Gastrocnemius medialis (tissue), 4 donors: ENCODE measurements at regions of chr13 and their contacts with region 1.

Region 1: DNA sequence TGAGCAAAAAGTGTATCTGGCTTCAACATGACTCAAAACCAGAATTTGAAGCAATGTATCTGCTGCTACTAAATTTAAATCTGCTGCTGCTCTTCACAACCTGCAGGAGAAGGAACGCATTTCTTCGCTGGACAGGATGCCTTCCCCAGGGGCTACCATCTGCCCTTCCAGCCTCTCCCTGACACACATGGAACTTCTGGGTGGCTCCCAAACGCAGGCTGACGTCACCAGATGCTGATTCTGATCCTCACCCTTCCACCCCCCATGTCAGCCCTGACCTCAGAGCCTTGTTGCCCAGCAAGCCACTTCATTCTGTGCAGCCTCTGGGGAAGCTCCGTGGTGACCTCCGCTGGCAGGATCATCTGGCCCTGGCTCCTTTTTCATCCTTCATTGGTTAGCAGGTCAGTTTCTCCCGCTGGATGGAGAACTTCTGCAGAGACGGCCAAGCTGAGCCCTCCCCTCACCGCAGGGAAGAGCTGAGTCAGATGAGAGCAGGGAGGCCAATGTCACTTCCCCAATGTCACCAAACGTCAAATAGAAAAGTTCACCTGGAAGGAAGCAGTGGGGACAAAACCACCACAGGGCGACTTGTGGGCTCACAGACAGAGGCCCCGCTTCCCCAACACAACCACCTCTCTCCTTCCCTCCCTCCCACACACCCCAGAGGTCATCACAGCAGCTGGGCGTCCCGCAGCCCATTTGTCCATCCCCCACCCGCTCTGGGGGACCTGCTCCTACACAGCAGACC is 14.0 kb upstream of the RAB20 start:
- DNase-seq: peak in 1 of 2 donors; percentile 23
- ATAC-seq: peak in 1 of 2 donors; percentile 41
- H3K4me3 ChIP-seq: no peak overlapping the region
- H3K27ac ChIP-seq: no peak overlapping the region
- H3K4me1 ChIP-seq: no peaks in the 10 kb centered on the region
- H3K27me3 ChIP-seq: peaks cover 0 to 10% (median 4%) of the 10 kb centered on the region in 3 donors
- CTCF ChIP-seq: no peak
- POLR2A ChIP-seq: no peak

Region 2: DNA sequence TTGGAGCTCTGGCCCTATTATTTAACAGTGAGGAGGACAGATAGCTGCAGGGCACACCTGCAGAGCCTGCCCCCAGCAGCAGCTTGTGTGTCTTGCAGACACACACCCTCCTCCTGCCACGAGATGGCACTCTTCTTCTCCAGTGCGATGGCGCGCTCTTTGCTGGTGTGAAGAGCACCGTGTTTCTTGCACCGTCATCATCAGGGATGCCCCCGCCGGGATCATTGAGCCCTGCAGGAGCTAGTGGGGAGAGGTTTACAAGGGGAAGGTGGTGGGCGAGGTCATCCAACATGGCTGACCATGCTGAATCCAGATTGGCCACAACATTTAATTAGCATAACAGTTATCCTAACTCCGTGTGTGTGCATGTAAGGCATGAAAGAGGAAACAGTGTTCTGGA is 119.6 kb before region 1 on chr13:
- in situ Hi-C with region 1: loop called in 2 of 4 experiments (anchors 10 to 25 kb)
- intact Hi-C with region 1: loop called (anchors 5 kb)
- DNase-seq: peak; percentile 54 to 74
- ATAC-seq: peak; percentile 82 to 96
- H3K4me3 ChIP-seq: peak overlapping the region in 1 of 4 donors; percentile 27
- H3K27ac ChIP-seq: no peak overlapping the region
- H3K4me1 ChIP-seq: no peaks in the 10 kb centered on the region
- H3K27me3 ChIP-seq: no peaks in the 10 kb centered on the region
- CTCF ChIP-seq: peak; percentile 69 to 82 (median 74)
- POLR2A ChIP-seq: no peak